ENCODE measurements at regions of chr1 and their contacts with region 1.

Region 1: DNA sequence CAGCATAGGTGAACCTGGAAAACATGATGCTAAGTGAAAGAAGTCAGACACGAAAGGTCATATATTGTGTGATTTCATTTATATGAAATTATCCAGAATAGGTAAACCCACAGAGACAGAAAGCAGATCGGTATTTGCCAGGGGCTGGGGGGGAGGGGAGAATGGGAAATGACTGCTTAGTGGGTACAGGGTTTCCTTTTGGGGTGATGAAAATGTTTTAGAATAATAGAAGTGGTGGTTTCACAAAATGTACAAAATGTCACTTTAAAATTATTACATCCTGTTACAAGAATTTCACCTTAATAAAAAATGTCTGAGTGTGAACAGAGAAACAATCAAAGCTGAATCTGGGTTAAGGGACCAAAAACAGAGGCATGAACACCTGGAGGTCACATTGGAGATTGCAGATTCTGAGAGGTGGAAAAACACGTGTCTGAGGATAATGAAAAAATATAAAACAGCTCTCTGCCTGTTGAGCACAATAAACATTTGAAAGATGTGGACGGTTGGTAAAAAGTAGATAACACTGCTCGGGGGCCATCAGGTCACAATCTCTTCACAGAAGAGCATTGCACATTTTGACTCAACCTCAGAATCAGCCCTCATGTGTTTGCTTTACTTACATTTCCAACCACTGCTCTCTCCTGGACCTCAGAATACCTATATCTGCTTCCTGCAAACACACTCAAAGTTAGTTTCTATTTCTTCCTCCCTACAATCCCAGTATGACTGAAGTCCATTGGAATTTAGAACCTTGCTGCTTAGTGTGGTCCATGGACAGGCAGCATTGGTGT is 3.2 kb downstream of the SLAMF6 start:
- DNase-seq: peak; percentile 49 to 62 (median 56)
- H3K4me3 ChIP-seq: peak overlapping the region; percentile 69 to 71
- H3K4me3 Mint-ChIP-seq: peak overlapping the region; percentile 91 to 98 (median 95)
- H3K27ac ChIP-seq: peak overlapping the region; percentile 60
- H3K27ac Mint-ChIP-seq: peak overlapping the region; percentile 84 to 98 (median 95)
- H3K4me1 ChIP-seq: peaks cover 80% of the 10 kb centered on the region
- H3K4me1 Mint-ChIP-seq: peaks cover 78 to 97% (median 81%) of the 10 kb centered on the region in 4 donors
- H3K27me3 ChIP-seq: no peaks in the 10 kb centered on the region
- H3K27me3 Mint-ChIP-seq: no peaks in the 10 kb centered on the region

Region 2: DNA sequence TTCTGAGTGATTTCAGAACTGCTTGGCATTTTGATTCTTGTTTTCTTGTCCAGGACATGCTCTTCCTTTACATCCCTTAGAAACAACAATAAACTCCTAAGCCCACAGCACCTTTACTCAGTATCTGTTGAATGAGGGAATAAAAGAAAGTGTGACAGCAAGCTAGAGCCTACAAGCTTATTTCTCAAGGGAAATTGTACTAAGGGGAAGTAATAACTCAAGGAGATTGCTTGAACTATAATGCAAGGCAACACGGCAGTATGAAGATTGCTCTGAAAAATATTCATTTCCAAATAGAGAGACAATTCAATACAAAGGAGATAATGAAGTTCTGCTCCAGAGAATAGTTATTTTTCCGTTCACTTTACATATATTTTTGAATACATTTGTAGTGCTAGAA is 1956.0 kb before region 1 on chr1:
- CTCF ChIA-PET with region 1: no interaction called
- POLR2A ChIA-PET with region 1: no interaction called
- intact Hi-C with region 1: no loop called
- DNase-seq: no peak
- H3K4me3 ChIP-seq: no peak overlapping the region
- H3K4me3 Mint-ChIP-seq: no peak overlapping the region
- H3K27ac ChIP-seq: no peak overlapping the region
- H3K27ac Mint-ChIP-seq: no peak overlapping the region
- H3K4me1 ChIP-seq: no peaks in the 10 kb centered on the region
- H3K4me1 Mint-ChIP-seq: no peaks in the 10 kb centered on the region
- H3K27me3 ChIP-seq: no peaks in the 10 kb centered on the region
- H3K27me3 Mint-ChIP-seq: peaks cover 15 to 23% of the 10 kb centered on the region in 2 donors

Region 3: GRCh38 chr1:160006312-160006940 is 513.4 kb before region 1 on chr1:
- CTCF ChIA-PET with region 1: no interaction called
- POLR2A ChIA-PET with region 1: no interaction called
- intact Hi-C with region 1: no loop called
- DNase-seq: peak; percentile 59 to 69 (median 62)
- H3K4me3 ChIP-seq: no peak overlapping the region
- H3K4me3 Mint-ChIP-seq: no peak overlapping the region
- H3K27ac ChIP-seq: no peak overlapping the region
- H3K27ac Mint-ChIP-seq: peak overlapping the region in 1 of 7 donors; percentile 13
- H3K4me1 ChIP-seq: no peaks in the 10 kb centered on the region
- H3K4me1 Mint-ChIP-seq: no peaks in the 10 kb centered on the region
- H3K27me3 ChIP-seq: no peaks in the 10 kb centered on the region
- H3K27me3 Mint-ChIP-seq: peaks cover 1 to 5% of the 10 kb centered on the region in 2 donors

Region 4: DNA sequence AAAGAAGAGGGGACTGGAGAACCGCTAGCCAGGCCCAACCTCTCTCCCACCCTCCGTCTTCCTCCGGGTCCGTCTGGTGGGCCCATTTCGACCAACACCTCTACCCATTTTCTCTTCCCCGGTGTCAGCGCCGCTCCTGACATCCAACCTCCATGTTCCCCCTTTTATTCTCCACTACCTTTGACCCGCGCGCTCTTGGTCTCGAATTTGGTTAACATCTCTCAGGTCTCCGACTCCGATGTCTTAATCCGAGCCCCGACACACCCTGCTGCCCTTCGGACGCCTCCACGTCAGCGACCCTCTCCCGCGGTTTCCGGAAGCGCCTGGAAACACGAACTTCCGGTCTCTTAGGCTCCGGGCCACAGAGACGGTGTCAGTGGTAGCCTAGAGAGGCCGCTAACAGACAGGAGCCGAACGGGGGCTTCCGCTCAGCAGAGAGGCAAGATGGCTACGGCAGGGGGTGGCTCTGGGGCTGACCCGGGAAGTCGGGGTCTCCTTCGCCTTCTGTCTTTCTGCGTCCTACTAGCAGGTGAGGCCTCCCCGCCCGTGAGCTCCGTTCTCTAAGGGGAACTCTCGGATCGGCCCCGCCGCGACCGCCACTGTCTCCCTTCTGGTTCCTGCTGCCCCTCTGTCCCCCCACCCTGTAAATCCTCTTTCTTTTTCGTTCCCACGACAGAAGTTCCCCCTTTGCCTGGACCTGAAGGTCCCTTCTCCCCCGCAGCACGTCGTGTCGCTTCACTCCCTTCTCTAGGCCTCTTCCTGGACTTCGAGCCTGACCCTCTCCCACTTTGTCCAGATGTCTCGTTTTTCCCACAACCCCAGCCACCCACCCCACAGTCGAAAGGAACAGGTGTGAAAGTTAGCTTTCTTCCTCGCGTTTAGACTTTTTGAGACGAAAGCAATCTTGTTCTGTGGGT is 176.6 kb before region 1 on chr1 and contains the starts of genes COPA and NCSTN:
- CTCF ChIA-PET with region 1: no interaction called
- POLR2A ChIA-PET with region 1: interaction called, 3 read pairs
- intact Hi-C with region 1: loop called (anchors 10 kb)
- DNase-seq: peak; percentile 89 to 95 (median 89)
- H3K4me3 ChIP-seq: peak within 1 kb of the TSS; percentile 77 to 96
- H3K4me3 Mint-ChIP-seq: peak within 1 kb of the TSS; percentile 99 to 100 (median 100)
- H3K27ac ChIP-seq: peak within 1 kb of the TSS; percentile 94
- H3K27ac Mint-ChIP-seq: peak within 1 kb of the TSS; percentile 96 to 100 (median 100)
- H3K4me1 ChIP-seq: peaks cover 44% of the 10 kb centered on the region
- H3K4me1 Mint-ChIP-seq: peaks cover 35 to 67% (median 49%) of the 10 kb centered on the region in 4 donors
- H3K27me3 ChIP-seq: no peaks in the 10 kb centered on the region
- H3K27me3 Mint-ChIP-seq: no peaks in the 10 kb centered on the region
- total RNA-seq, gene COPA: 128 to 132 TPM
- total RNA-seq, gene NCSTN: 62.2 to 68.0 TPM

Region 5: GRCh38 chr1:160483505-160484185 is 36.2 kb before region 1 on chr1:
- CTCF ChIA-PET with region 1: interaction called, 4 read pairs
- POLR2A ChIA-PET with region 1: interaction called, 12 read pairs
- intact Hi-C with region 1: no loop called
- DNase-seq: no peak
- H3K4me3 ChIP-seq: no peak overlapping the region
- H3K4me3 Mint-ChIP-seq: peak overlapping the region in 1 of 8 donors; percentile 26
- H3K27ac ChIP-seq: no peak overlapping the region
- H3K27ac Mint-ChIP-seq: peak overlapping the region; percentile 20 to 89 (median 60)
- H3K4me1 ChIP-seq: peaks cover 24% of the 10 kb centered on the region
- H3K4me1 Mint-ChIP-seq: peaks cover 36 to 53% (median 44%) of the 10 kb centered on the region in 4 donors
- H3K27me3 ChIP-seq: no peaks in the 10 kb centered on the region
- H3K27me3 Mint-ChIP-seq: no peaks in the 10 kb centered on the region

Region 6: DNA sequence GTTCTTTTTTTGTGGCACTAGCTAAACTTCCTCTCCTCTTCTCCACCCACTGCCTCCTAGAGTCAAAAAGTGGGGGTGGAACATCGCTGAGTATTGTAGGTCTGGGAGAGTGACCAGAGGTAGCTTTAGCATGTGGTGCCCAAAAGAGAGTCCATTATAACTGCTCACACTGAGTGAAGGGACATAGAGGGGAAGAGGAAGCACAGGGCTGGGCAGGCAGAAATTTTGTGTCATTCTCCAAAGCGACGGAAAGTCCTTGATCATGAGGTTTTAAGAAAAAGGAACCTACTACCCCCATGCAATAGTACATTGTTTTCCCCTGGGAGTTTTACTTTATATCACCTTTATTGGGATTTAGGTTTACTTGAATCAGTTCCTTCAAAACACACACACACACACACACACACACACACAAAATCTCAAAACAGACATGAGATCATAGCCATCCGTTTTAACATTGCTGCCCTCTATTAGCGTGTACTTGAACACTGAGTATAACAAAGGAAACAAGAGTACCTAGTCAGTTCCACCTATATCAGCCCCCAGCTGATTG is 55.3 kb after region 1 on chr1:
- CTCF ChIA-PET with region 1: interaction called, 3 read pairs
- POLR2A ChIA-PET with region 1: interaction called, 34 read pairs
- intact Hi-C with region 1: no loop called
- DNase-seq: peak in 2 of 5 donors; percentile 26 to 49
- H3K4me3 ChIP-seq: peak overlapping the region; percentile 15 to 80
- H3K4me3 Mint-ChIP-seq: peak overlapping the region; percentile 83 to 98 (median 94)
- H3K27ac ChIP-seq: peak overlapping the region; percentile 68
- H3K27ac Mint-ChIP-seq: peak overlapping the region; percentile 89 to 95 (median 92)
- H3K4me1 ChIP-seq: peaks cover 83% of the 10 kb centered on the region
- H3K4me1 Mint-ChIP-seq: peaks cover 64 to 94% (median 73%) of the 10 kb centered on the region in 4 donors
- H3K27me3 ChIP-seq: no peaks in the 10 kb centered on the region
- H3K27me3 Mint-ChIP-seq: no peaks in the 10 kb centered on the region

Region 7: DNA sequence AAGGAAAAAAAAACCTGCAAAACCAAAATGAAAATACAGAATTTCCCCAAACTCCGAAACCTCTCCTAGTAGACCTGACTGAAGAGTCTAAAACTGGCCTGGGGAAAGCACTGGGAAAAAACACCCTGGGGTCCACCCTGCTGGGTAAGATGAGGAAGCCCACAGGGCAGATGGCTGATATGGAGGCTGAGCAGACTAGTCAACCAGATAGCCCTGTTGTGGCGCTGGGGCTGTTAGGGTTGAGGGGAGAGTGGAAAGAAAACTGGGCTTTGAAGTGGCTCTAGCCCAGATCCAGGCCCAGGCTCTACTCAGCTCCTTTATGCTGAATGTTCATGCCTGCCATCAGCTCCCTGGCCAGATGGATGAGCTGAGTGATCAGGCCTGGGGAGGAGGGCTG is 133.8 kb after region 1 on chr1:
- CTCF ChIA-PET with region 1: no interaction called
- POLR2A ChIA-PET with region 1: no interaction called
- intact Hi-C with region 1: no loop called
- DNase-seq: no peak
- H3K4me3 ChIP-seq: no peak overlapping the region
- H3K4me3 Mint-ChIP-seq: no peak overlapping the region
- H3K27ac ChIP-seq: no peak overlapping the region
- H3K27ac Mint-ChIP-seq: peak overlapping the region in 1 of 7 donors; percentile 9
- H3K4me1 ChIP-seq: peaks cover 55% of the 10 kb centered on the region
- H3K4me1 Mint-ChIP-seq: peaks cover 39 to 89% (median 69%) of the 10 kb centered on the region in 4 donors
- H3K27me3 ChIP-seq: no peaks in the 10 kb centered on the region
- H3K27me3 Mint-ChIP-seq: no peaks in the 10 kb centered on the region

Region 8: GRCh38 chr1:160681067-160681890 is 161.4 kb after region 1 on chr1:
- CTCF ChIA-PET with region 1: no interaction called
- POLR2A ChIA-PET with region 1: no interaction called
- intact Hi-C with region 1: no loop called
- DNase-seq: peak; percentile 82 to 88 (median 85)
- H3K4me3 ChIP-seq: no peak overlapping the region
- H3K4me3 Mint-ChIP-seq: peak overlapping the region in 5 of 8 donors; percentile 15 to 58 (median 26)
- H3K27ac ChIP-seq: peak overlapping the region; percentile 55
- H3K27ac Mint-ChIP-seq: peak overlapping the region; percentile 67 to 97 (median 91)
- H3K4me1 ChIP-seq: peaks cover 55% of the 10 kb centered on the region
- H3K4me1 Mint-ChIP-seq: peaks cover 49 to 69% (median 53%) of the 10 kb centered on the region in 4 donors
- H3K27me3 ChIP-seq: no peaks in the 10 kb centered on the region
- H3K27me3 Mint-ChIP-seq: no peaks in the 10 kb centered on the region